Posterior cingulate gyrus (tissue), 11 donors: ENCODE measurements at regions of chr17 and their contacts with region 1.

Region 1: DNA sequence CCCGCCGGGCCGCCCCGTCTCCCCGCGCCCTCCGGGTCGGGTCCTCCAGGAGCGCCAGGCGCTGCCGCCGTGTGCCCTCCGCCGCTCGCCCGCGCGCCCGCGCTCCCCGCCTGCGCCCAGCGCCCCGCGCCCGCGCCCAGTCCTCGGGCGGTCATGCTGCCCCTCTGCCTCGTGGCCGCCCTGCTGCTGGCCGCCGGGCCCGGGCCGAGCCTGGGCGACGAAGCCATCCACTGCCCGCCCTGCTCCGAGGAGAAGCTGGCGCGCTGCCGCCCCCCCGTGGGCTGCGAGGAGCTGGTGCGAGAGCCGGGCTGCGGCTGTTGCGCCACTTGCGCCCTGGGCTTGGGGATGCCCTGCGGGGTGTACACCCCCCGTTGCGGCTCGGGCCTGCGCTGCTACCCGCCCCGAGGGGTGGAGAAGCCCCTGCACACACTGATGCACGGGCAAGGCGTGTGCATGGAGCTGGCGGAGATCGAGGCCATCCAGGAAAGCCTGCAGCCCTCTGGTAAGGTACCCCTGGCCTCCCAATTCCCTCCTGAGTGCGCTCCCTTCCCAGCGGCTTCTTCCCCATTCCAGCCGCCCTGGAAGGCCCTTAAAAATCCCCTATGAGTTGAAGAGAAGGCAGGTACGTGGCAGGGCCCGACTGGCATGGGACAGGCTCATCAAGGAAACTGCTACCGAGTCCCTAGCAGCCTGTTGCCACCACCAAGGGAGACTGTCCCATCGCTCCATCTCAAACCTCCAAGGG is 505 bp downstream of the IGFBP4 start:
- DNase-seq: peak; percentile 45 to 96 (median 76)

Region 2: GRCh38 chr17:40559954-40560591 is 116.3 kb after region 1 on chr17:
- intact Hi-C with region 1: loop called (anchors 2 kb)
- DNase-seq: peak; percentile 83 to 98 (median 91)